Activated naive CD4-positive, alpha-beta T cell treated with anti-CD3 and anti-CD28 coated beads for 36 hours (primary cell): ENCODE measurements at regions of chr12 and their contacts with region 1.

Region 1: GRCh38 chr12:47837190-47838171 is 17.8 kb upstream of the HDAC7 start:
- DNase-seq: peak; percentile 77
- H3K4me3 Mint-ChIP-seq: no peak overlapping the region
- H3K27ac Mint-ChIP-seq: peak overlapping the region; percentile 69
- H3K4me1 Mint-ChIP-seq: peaks cover 61% of the 10 kb centered on the region
- H3K27me3 Mint-ChIP-seq: no peaks in the 10 kb centered on the region

Region 2: DNA sequence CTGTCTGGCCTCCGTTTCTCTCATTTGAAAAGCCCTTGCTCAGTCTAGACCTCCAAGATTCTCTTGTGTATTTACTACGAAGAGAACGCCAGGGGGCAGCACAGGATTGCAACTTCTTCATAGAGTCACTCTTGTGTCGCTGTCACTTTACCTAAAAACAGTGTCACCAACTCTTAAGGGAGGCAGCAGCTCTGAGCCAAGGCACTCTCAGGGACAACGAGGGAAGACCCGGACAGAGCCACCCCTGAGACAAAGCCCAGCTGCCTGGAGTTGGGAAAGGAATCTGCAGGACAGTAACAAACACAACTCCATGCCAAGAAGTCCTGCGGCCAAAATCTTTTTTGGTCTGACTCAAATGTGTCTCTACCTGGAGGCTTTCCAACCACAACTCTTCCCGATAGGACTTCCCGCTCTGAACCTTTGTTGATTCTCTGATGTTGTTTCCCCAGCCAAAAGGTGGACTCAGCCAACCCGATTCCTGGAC is 122.0 kb before region 1 on chr12:
- CTCF ChIA-PET with region 1: interaction called, 55 read pairs
- intact Hi-C with region 1: loop called (anchors 1 kb)
- DNase-seq: peak; percentile 90
- H3K4me3 Mint-ChIP-seq: no peak overlapping the region
- H3K27ac Mint-ChIP-seq: no peak overlapping the region
- H3K4me1 Mint-ChIP-seq: peaks cover 31% of the 10 kb centered on the region
- H3K27me3 Mint-ChIP-seq: no peaks in the 10 kb centered on the region

Region 3: DNA sequence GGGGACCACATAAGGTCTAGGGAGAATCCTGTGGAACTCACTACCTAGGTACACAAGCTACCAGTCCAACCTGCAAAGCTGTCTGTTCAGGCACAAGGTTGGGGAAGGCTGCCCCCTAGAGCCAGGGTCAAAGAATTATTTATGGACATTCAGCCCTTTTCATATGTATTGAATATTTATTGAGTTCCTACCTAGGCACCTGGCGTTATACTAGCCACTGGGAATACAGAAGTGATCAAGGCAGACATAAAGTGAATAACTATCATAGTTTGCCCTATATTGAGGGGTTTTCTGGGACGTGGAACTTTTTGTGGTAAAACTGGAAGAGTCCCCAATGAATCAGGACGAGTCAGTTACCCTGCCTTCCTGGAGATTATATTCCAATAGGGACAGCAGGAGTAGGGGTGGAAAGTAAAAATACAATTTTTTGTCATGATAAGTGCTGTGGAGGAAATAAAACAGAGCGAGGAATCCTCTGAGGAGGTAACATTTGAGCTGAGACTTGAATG is 70.2 kb before region 1 on chr12:
- CTCF ChIA-PET with region 1: interaction called, 376 read pairs
- intact Hi-C with region 1: loop called (anchors 1 kb)
- DNase-seq: peak; percentile 89
- H3K4me3 Mint-ChIP-seq: no peak overlapping the region
- H3K27ac Mint-ChIP-seq: no peak overlapping the region
- H3K4me1 Mint-ChIP-seq: no peaks in the 10 kb centered on the region
- H3K27me3 Mint-ChIP-seq: no peaks in the 10 kb centered on the region

Region 4: DNA sequence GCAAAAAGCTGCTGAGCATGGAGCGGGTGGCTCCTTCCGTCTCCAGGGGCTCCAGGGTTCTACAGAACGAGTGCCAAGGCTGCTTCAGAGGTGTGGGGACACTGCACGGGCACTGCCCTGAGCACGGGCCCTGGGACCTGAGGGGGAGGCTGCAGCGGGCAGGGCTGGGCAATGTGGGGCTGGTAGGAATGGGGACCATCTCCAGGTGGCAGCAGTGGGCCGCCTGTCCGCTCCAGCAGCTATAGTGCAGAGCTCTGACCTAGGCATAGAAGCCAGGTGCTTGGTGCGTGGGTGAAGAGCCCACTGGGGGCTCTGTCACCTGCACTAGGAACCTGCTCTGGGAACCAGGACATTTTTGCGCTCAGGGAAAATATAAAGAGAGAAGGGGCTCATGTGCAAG is 40.0 kb before region 1 on chr12:
- CTCF ChIA-PET with region 1: interaction called, 848 read pairs
- intact Hi-C with region 1: loop called (anchors 1 kb)
- DNase-seq: peak; percentile 55
- H3K4me3 Mint-ChIP-seq: no peak overlapping the region
- H3K27ac Mint-ChIP-seq: peak overlapping the region; percentile 87
- H3K4me1 Mint-ChIP-seq: peaks cover 38% of the 10 kb centered on the region
- H3K27me3 Mint-ChIP-seq: no peaks in the 10 kb centered on the region

Region 5: DNA sequence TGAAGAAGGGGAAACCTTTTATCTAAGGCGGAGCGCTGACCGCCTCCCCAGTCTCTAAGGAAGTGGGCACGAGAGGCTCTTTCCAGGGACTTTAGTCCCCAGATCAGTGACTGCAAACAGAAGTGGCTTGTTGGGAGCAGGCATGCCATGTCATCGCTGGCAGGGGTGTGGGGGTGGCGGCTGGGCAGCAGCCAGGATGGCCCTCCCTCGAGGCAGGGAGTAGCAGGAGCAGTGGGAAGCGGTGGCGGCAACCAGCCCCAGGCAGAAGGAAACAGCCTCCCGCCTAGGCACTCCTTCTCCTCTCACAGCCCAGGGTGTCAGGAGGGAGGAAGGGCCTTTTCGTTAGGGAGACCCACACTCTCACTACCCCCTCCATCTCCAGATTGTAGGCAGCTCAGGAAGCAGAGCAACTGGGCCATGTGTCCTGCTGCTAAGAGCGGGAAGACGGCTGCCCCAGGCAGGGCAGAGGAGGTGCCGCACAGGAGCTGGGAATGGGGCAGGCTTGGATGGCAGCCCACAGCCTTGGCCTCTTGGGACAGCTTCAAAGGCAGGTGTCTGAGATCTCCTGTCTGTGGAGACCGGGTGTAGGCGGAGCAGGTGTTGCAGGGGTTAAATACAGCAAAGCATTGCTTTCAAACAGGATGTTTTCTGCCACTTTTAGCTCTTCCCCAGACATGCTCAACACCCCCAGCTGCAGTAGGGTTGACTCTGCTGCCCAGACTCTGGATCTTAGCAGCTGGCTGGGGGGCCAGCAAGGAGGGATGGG is 45.5 kb after region 1 on chr12:
- CTCF ChIA-PET with region 1: interaction called, 50 read pairs
- intact Hi-C with region 1: loop called (anchors 1 kb)
- DNase-seq: peak; percentile 73
- H3K4me3 Mint-ChIP-seq: peak overlapping the region; percentile 78
- H3K27ac Mint-ChIP-seq: peak overlapping the region; percentile 97
- H3K4me1 Mint-ChIP-seq: peaks cover 69% of the 10 kb centered on the region
- H3K27me3 Mint-ChIP-seq: no peaks in the 10 kb centered on the region

Region 6: GRCh38 chr12:48105862-48106680 is 268.6 kb after region 1 on chr12 and contains the start of gene SENP1:
- CTCF ChIA-PET with region 1: no interaction called
- intact Hi-C with region 1: no loop called
- DNase-seq: peak; percentile 94
- H3K4me3 Mint-ChIP-seq: peak within 1 kb of the TSS; percentile 87
- H3K27ac Mint-ChIP-seq: peak within 1 kb of the TSS; percentile 96
- H3K4me1 Mint-ChIP-seq: peaks cover 47% of the 10 kb centered on the region
- H3K27me3 Mint-ChIP-seq: no peaks in the 10 kb centered on the region
- total RNA-seq, gene SENP1: 41.4 to 47.8 TPM